Common myeloid progenitor, CD34-positive (primary cell): ENCODE measurements at regions of chr1 and their contacts with region 1.

Region 1: GRCh38 chr1:30756545-30757195 is 904 bp downstream of the LAPTM5 start:
- DNase-seq: peak; percentile 97 to 100 (median 99)
- H3K4me3 ChIP-seq: peak overlapping the region; percentile 51 to 96 (median 93)
- H3K27ac ChIP-seq: peak overlapping the region; percentile 97 to 99
- H3K4me1 ChIP-seq: peaks cover 51 to 98% (median 91%) of the 10 kb centered on the region in 4 experiments
- H3K27me3 ChIP-seq: no peaks in the 10 kb centered on the region

Region 2: GRCh38 chr1:30732277-30732996 is 24.2 kb before region 1 on chr1:
- CTCF ChIA-PET with region 1: interaction called, 16 read pairs
- POLR2A ChIA-PET with region 1: interaction called, 25 read pairs
- DNase-seq: peak; percentile 38 to 78 (median 64)
- H3K4me3 ChIP-seq: no peak overlapping the region
- H3K27ac ChIP-seq: no peak overlapping the region
- H3K4me1 ChIP-seq: peaks cover 0 to 16% (median 5%) of the 10 kb centered on the region in 4 experiments
- H3K27me3 ChIP-seq: no peaks in the 10 kb centered on the region

Region 3: DNA sequence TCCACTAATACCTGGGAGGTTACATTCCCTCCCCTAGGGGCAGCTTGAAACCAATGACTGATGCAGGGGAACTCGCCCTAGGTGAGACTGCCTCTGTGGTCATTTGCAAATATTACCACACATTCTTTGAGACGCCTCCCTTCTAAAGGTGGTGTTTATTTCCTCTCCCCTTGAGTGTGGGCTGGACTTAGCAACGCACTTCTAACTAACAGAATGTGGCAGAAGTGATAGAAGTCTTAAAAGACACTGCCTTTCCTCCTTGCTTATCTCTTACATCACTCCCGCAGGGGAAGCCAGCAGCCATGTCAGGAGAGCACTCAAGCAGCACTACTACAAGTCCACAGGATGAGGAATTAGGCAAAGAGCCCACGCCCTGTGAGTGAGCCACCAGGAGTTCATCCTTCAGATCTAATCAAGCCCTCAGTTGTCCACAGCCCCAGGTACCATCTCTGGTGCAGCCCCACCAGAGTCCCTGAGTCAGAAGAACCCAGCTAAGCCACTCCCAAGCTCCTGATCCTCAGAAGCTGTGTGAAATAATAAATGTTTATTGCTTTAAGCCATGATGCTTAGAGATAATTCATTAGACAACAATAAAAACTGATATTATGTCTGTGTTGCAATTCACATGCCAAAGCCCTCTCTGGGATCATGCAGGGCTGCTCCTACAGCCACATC is 18.5 kb before region 1 on chr1:
- CTCF ChIA-PET with region 1: interaction called, 152 read pairs
- POLR2A ChIA-PET with region 1: interaction called, 92 read pairs
- DNase-seq: no peak
- H3K4me3 ChIP-seq: no peak overlapping the region
- H3K27ac ChIP-seq: no peak overlapping the region
- H3K4me1 ChIP-seq: peaks cover 12 to 47% (median 43%) of the 10 kb centered on the region in 4 experiments
- H3K27me3 ChIP-seq: no peaks in the 10 kb centered on the region

Region 4: DNA sequence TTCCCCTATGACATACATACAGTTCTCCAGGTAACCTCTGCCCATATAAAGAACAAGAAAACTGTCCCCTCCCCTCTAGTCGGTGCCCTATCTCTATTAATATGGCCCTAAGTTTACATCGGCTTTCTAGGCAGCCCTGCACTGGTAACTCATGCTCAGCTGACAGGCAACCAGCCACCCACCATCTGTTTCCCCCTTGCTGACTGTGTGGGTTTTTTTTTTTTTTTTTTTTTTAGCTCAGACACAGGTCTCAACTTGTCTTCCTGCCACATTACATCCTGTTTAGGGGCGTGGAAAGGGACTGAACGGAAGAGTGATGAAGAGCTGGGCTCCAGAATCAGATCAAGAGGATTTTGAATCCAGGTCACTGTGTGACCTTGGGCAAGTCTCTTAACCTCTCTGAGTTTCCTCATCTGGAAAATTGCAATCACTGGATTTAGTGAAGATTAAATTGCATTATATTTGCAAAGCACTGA is 13.0 kb before region 1 on chr1:
- CTCF ChIA-PET with region 1: interaction called, 152 read pairs
- POLR2A ChIA-PET with region 1: interaction called, 92 read pairs
- DNase-seq: peak; percentile 90 to 98 (median 97)
- H3K4me3 ChIP-seq: peak overlapping the region in 2 of 7 experiments; percentile 0 to 20
- H3K27ac ChIP-seq: peak overlapping the region in 1 of 2 experiments; percentile 56
- H3K4me1 ChIP-seq: peaks cover 14 to 98% (median 93%) of the 10 kb centered on the region in 4 experiments
- H3K27me3 ChIP-seq: no peaks in the 10 kb centered on the region

Region 5: DNA sequence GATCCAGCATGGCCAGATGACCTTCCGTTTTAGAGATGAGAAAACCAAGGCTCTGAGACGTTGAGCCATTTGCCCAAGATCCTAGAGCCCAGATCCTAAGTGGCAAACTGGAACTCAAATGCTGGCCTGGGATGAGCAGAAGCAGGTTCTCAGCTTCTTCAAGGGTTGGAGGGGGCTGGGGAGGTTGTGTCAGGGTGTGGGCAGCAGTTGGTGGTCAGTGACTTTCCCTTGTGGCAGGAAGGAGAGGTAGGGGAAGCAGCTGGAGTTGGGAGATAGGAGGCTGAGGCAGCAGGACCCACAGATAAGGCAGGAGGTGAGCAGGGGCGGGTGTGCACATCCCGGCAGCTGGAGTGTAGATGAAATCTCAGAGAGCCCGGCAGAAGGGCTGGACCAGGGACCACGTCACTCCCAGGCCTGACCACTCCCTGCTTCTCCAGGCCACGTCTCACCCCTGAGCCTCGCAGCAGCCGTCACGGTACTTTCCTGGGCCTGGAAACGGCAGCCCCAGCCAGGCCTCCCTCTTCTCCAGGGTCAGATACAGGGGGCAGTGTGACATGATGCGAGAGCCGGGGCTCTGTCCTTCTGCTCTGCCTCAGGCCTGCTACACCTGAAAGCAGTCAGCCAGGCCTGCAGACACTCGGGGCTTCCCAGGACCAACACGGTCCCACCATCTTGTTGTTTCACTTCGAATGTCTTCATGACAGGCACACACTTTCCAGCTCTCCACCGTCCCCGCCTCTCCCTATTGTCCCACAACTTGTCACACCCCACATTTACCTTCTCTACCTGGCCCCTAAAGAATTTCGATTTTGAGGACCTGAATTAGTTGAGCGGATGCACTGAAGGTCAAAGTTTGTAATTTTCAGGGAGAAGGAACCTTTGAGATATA is 12.4 kb after region 1 on chr1:
- CTCF ChIA-PET with region 1: interaction called, 58 read pairs
- POLR2A ChIA-PET with region 1: interaction called, 119 read pairs
- DNase-seq: peak; percentile 94 to 99 (median 99)
- H3K4me3 ChIP-seq: peak overlapping the region in 3 of 7 experiments; percentile 2 to 54 (median 13)
- H3K27ac ChIP-seq: peak overlapping the region in 1 of 2 experiments; percentile 83
- H3K4me1 ChIP-seq: peaks cover 9 to 35% (median 31%) of the 10 kb centered on the region in 4 experiments
- H3K27me3 ChIP-seq: no peaks in the 10 kb centered on the region

Region 6: DNA sequence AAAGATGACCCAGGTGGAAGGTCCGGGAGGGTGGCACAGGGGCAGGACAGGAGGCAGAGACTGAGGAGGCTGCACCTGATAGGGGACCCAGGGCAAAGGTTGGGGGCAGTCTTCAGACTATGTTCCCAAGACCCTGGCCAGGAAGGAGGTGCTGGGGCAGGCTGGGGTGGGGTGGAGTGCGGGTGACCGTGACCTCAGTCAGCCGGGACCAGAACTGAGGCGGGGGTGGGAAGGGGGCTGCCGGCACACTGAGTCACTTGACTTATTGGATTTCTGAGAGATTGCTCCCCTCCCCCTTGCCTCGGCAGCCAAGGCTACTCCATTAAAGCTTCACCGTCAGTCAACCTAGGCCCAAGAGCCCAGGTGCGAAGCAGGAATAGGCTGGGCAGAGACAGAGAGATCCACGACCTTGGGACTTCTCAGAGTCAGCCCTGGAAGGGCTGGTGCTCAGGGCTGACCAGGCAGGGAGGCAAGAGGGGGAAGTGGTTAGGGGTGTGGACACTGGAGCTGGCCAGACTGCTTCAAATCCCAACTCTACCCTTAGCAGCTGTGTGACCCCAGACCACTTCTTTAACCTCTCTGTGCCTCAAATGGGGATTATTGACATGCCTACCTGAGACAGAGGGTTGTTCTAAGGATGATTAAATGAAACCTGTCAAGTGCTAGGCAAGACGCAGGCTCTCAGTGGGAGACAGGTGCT is 48.8 kb after region 1 on chr1:
- CTCF ChIA-PET with region 1: no interaction called
- POLR2A ChIA-PET with region 1: no interaction called
- DNase-seq: no peak
- H3K4me3 ChIP-seq: no peak overlapping the region
- H3K27ac ChIP-seq: no peak overlapping the region
- H3K4me1 ChIP-seq: peaks cover 0 to 6% (median 1%) of the 10 kb centered on the region in 4 experiments
- H3K27me3 ChIP-seq: peaks cover 5 to 83% (median 56%) of the 10 kb centered on the region in 5 experiments

Region 7: GRCh38 chr1:30856260-30856790 is 99.7 kb after region 1 on chr1:
- CTCF ChIA-PET with region 1: no interaction called
- POLR2A ChIA-PET with region 1: no interaction called
- DNase-seq: no peak
- H3K4me3 ChIP-seq: no peak overlapping the region
- H3K27ac ChIP-seq: no peak overlapping the region
- H3K4me1 ChIP-seq: peaks cover 0 to 15% (median 4%) of the 10 kb centered on the region in 4 experiments
- H3K27me3 ChIP-seq: peaks cover 7 to 80% (median 37%) of the 10 kb centered on the region in 5 experiments